Natural killer cell (primary cell): ENCODE measurements at regions of chr19 and their contacts with region 1.

Region 1: DNA sequence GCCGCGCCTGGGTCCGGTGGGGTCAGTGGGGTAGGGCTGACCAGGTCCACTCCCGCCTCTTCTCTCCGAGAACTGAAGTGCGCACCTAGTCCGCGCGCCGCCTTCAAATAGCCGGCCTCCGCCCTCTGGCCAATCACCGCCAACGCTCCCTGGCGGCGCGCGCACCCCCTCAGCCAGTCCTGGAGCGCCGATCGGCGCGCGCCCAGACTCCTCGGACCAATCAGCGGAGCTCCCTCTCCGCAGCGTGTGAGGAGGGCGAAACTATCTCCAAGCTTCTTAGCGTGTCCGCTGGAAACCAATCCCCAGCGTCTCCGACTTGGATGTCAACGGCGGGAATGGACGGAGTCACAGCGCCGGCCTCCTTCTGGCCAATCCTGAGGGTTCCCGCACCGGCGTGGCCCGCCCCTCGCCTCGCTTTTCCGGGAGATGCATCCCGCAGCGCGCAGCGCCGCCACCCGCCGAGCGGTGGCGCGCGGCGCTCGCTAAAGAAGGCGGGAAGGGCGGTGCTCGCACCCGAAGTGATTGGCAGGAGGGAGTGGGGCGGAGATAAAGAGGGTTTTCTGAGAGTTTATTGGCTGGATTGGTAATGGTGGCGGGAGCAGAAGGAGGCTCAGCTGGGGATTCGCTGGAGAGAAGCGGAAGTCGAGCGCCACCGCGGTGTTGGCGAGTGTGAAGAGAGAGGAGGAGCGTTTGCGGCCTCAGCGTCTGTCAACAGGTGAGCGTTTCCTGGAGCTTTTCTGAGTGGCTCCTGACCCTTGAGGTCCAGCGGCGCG is at the start of gene ASF1B:
- DNase-seq: peak; percentile 95 to 99
- ATAC-seq: peak; percentile 78 to 91 (median 82)
- H3K4me3 ChIP-seq: peak within 1 kb of the TSS; percentile 86
- H3K4me3 Mint-ChIP-seq: peak within 1 kb of the TSS; percentile 90
- H3K27ac ChIP-seq: peak within 1 kb of the TSS; percentile 95
- H3K27ac Mint-ChIP-seq: peak within 1 kb of the TSS; percentile 88 to 90
- H3K4me1 ChIP-seq: peaks cover 25% of the 10 kb centered on the region
- H3K4me1 Mint-ChIP-seq: peaks cover 27 to 37% of the 10 kb centered on the region in 2 donors
- H3K27me3 ChIP-seq: no peaks in the 10 kb centered on the region
- H3K27me3 Mint-ChIP-seq: no peaks in the 10 kb centered on the region
- CTCF ChIP-seq: peak; percentile 73
- total RNA-seq, gene ASF1B: 4.5 to 5.5 (median 4.8) TPM

Region 2: DNA sequence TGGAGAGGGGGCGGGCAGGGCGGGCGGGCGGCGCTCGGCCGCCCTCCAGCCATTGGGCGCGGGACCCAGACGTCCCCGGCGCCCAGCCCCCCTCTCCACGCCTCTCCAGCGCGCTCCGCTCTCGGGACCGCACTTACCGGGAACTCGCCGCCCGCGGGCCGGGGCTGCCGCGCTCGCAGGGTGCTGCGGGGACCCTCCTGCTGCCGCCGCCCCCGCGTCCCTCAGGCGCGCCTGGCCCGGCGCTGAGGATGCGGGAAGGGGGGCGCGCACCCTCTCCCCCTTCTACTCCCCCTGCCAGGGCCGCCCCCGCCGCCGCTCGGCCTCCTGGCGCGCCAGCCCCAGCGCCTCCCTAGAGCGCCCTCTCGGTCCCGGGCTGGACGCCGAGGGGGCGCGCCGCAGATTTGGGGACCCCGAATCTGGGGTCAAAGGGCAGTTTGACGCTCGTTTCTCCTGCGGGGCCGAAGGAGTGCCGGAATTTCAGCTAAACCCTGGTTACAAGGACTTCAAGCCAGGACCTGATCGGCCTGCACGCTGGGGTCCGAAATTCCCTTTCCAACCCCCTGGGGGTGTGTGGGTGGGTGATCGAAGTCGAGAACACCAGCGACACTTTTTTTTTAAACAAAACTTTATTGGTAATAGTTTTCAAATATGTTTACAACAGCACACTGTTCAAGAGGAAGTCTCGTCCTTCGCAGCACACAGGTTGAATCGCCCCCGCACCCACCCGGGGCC is 45.4 kb before region 1 on chr19:
- intact Hi-C with region 1: loop called (anchors 5 kb)
- DNase-seq: peak; percentile 67 to 79
- ATAC-seq: peak; percentile 68 to 83 (median 75)
- H3K4me3 ChIP-seq: peak overlapping the region; percentile 73
- H3K4me3 Mint-ChIP-seq: peak overlapping the region; percentile 97
- H3K27ac ChIP-seq: peak overlapping the region; percentile 63
- H3K27ac Mint-ChIP-seq: peak overlapping the region; percentile 86 to 90
- H3K4me1 ChIP-seq: peaks cover 17% of the 10 kb centered on the region
- H3K4me1 Mint-ChIP-seq: peaks cover 14 to 15% of the 10 kb centered on the region in 2 donors
- H3K27me3 ChIP-seq: no peaks in the 10 kb centered on the region
- H3K27me3 Mint-ChIP-seq: no peaks in the 10 kb centered on the region
- CTCF ChIP-seq: no peak

Region 3: DNA sequence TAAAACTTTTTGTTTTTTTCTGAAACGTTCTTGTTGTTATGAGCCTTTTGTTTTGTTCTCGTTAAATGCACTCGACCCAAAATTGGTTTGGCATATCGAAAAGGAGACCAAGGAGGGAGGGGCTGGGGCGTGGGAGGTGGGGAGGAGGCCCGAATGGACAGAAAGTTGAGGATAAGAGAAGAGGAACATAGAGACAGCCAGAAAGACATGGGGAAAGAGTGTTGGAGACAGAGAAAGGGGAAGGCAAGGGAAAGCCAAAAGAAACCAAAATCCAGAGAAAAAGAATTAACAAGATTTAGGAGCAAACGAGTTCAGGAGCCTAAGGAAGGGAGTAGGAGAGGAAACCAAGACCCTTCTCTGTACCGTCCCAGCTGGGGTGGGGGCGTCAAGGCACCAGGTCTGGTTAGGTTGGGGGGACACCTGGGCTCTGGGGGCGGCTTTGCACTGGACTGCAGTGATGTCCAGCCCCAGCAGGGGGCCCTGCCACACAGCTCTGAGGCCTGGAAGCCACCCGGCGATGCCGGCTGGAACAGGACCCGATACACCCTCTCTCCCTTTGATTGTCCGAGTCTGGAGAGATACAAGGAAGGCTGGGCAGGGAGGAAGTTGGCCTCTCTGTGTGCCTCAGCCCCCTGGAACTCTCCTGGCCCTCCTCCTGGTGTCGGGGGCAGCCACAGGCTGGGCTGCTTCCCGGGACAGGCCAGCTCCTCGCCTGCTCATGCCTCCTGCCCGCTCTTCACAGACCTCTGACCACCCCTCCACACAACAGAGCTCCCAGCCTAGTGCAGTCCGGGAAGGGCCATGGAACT is 11.3 kb after region 1 on chr19:
- intact Hi-C with region 1: loop called (anchors 1 kb)
- DNase-seq: peak; percentile 71 to 73
- ATAC-seq: peak; percentile 84 to 91 (median 86)
- H3K4me3 ChIP-seq: no peak overlapping the region
- H3K4me3 Mint-ChIP-seq: peak overlapping the region; percentile 81
- H3K27ac ChIP-seq: peak overlapping the region; percentile 87
- H3K27ac Mint-ChIP-seq: peak overlapping the region; percentile 92 to 97
- H3K4me1 ChIP-seq: peaks cover 31% of the 10 kb centered on the region
- H3K4me1 Mint-ChIP-seq: peaks cover 23 to 37% of the 10 kb centered on the region in 2 donors
- H3K27me3 ChIP-seq: no peaks in the 10 kb centered on the region
- H3K27me3 Mint-ChIP-seq: no peaks in the 10 kb centered on the region
- CTCF ChIP-seq: peak; percentile 87

Region 4: GRCh38 chr19:14419106-14419813 is 282.6 kb after region 1 on chr19 and contains the start of gene DDX39A:
- intact Hi-C with region 1: loop called (anchors 2 kb)
- DNase-seq: peak; percentile 94 to 99
- ATAC-seq: peak; percentile 80 to 94 (median 82)
- H3K4me3 ChIP-seq: peak within 1 kb of the TSS; percentile 69
- H3K4me3 Mint-ChIP-seq: peak within 1 kb of the TSS; percentile 94
- H3K27ac ChIP-seq: peak within 1 kb of the TSS; percentile 93
- H3K27ac Mint-ChIP-seq: peak within 1 kb of the TSS; percentile 93 to 98
- H3K4me1 ChIP-seq: peaks cover 45% of the 10 kb centered on the region
- H3K4me1 Mint-ChIP-seq: peaks cover 40 to 45% of the 10 kb centered on the region in 2 donors
- H3K27me3 ChIP-seq: no peaks in the 10 kb centered on the region
- H3K27me3 Mint-ChIP-seq: no peaks in the 10 kb centered on the region
- CTCF ChIP-seq: no peak
- total RNA-seq, gene DDX39A: 397 to 569 (median 557) TPM

Region 5: DNA sequence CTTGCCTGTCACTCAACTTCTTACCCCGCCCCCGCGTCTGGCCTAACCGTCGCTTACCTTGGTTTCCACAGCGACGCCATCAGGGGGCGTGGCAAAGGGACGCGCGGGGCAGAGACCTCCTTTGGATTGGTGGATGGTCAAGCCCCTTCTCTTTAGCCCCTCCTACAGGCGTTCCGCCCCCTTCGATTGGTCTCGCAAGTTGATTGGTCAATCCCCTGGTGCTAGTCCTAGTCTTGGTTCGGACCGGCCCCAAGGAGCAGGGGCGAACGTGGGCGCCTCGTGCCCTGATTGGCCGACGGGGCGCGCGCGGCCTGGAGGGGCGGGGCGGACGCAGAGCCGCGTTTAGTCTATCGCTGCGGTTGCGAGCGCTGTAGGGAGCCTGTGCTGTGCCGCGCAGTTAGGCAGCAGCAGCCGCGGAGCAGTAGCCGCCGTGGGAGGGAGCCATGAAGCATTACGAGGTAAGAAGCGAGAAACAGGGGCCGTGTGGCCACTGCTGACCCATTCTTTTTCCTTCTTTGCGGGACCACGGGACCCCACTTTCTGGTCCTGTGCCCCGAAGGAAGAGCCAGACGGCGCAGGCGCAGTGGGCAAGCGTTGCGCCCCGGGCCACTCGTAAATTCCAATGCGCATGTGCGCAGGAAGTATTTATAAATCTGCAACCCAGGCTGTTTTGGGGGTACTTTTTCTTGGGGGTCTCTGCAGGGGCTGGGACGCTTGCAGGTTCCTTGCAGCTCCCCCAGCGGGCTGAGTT is 392.7 kb after region 1 on chr19 and contains the start of gene TECR:
- intact Hi-C with region 1: loop called (anchors 2 kb)
- DNase-seq: peak; percentile 99 to 100
- ATAC-seq: peak; percentile 93 to 99 (median 94)
- H3K4me3 ChIP-seq: peak within 1 kb of the TSS; percentile 64
- H3K4me3 Mint-ChIP-seq: peak within 1 kb of the TSS; percentile 96
- H3K27ac ChIP-seq: peak within 1 kb of the TSS; percentile 86
- H3K27ac Mint-ChIP-seq: peak within 1 kb of the TSS; percentile 95 to 97
- H3K4me1 ChIP-seq: peaks cover 20% of the 10 kb centered on the region
- H3K4me1 Mint-ChIP-seq: peaks cover 9 to 12% of the 10 kb centered on the region in 2 donors
- H3K27me3 ChIP-seq: no peaks in the 10 kb centered on the region
- H3K27me3 Mint-ChIP-seq: no peaks in the 10 kb centered on the region
- CTCF ChIP-seq: no peak
- total RNA-seq, gene TECR: 123 to 158 (median 131) TPM